ENCODE measurements at regions of chr19 and their contacts with region 1.

Region 1: GRCh38 chr19:35135389-35135909 is 590 bp upstream of the LGI4 start:
- DNase-seq: peak; percentile 98
- H3K4me3 ChIP-seq: no peak overlapping the region
- H3K27ac ChIP-seq: no peak overlapping the region
- H3K4me1 ChIP-seq: peaks cover 0 to 7% of the 10 kb centered on the region in 2 experiments; a peak in 1 of 4 replicates
- H3K27me3 ChIP-seq: peaks cover 15% of the 10 kb centered on the region; the same call in 1 of the 2 replicates
- CTCF ChIP-seq: peak; percentile 88
- EP300 ChIP-seq: 0 out of 4 replicates have a peak, but pooled peaks of 1 of the 2 experiments have one; percentile 14
- RAD21 ChIP-seq: peak; percentile 73

Region 2: DNA sequence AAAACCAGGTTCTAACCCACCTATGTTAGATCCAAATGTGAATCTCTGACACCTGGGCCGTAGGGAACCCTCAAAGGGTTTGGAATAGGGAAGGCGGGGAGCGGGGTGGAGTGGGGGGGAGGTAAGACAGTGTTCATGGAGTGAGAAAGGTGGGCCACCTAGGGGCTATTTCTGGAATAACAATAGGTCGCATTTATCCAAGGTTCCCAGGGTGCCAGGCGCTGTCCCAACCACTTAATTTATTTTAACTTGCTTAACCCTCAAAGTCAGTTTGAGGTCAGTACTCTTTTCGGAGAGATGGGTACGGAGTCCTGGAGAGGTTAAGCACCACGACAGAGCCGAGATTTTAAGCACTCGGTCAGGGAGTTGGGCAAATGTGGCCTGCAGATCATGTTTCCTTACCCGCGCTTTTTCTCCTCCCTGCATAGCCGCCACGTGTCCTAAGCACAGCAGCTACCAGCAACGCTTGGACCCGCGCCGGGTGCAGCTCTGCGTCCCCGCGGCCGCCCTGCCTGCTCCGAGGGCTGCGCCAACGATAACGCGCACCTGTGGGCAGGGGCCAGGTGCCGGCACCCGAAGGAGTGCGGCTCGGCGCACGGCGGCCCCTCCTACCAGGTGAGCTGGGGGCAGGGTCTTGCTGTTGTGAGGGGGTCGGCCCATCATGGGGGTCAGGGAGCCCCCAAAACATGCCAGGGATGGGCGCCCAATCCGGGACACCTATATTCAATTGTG is 44.8 kb before region 1 on chr19:
- CTCF ChIA-PET with region 1: interaction called, 25 read pairs
- POLR2A ChIA-PET with region 1: no interaction called
- DNase-seq: peak; percentile 90
- H3K4me3 ChIP-seq: no peak overlapping the region
- H3K27ac ChIP-seq: no peak overlapping the region
- H3K4me1 ChIP-seq: peaks cover 10 to 15% of the 10 kb centered on the region in 2 experiments; a peak in 2 of 4 replicates
- H3K27me3 ChIP-seq: no peaks in the 10 kb centered on the region
- CTCF ChIP-seq: peak; percentile 68
- EP300 ChIP-seq: no peak
- RAD21 ChIP-seq: peak; percentile 71

Region 3: GRCh38 chr19:35098413-35099049 is 36.9 kb before region 1 on chr19:
- CTCF ChIA-PET with region 1: interaction called, 25 read pairs
- POLR2A ChIA-PET with region 1: no interaction called
- DNase-seq: no peak
- H3K4me3 ChIP-seq: no peak overlapping the region
- H3K27ac ChIP-seq: no peak overlapping the region
- H3K4me1 ChIP-seq: peaks cover 0 to 8% of the 10 kb centered on the region in 2 experiments; a peak in 1 of 4 replicates
- H3K27me3 ChIP-seq: no peaks in the 10 kb centered on the region
- CTCF ChIP-seq: no peak
- EP300 ChIP-seq: no peak
- RAD21 ChIP-seq: no peak

Region 4: GRCh38 chr19:35114353-35115176 is 20.9 kb before region 1 on chr19:
- CTCF ChIA-PET with region 1: interaction called, 66 read pairs
- POLR2A ChIA-PET with region 1: no interaction called
- DNase-seq: peak; percentile 92
- H3K4me3 ChIP-seq: peak overlapping the region in 1 of 2 experiments; percentile 44; a peak in 1 of 4 replicates
- H3K27ac ChIP-seq: no peak overlapping the region
- H3K4me1 ChIP-seq: peaks cover 0 to 8% of the 10 kb centered on the region in 2 experiments; a peak in 1 of 4 replicates
- H3K27me3 ChIP-seq: no peaks in the 10 kb centered on the region; the same call in 1 of the 2 replicates
- CTCF ChIP-seq: peak; percentile 96
- EP300 ChIP-seq: no peak
- RAD21 ChIP-seq: peak; percentile 70

Region 5: DNA sequence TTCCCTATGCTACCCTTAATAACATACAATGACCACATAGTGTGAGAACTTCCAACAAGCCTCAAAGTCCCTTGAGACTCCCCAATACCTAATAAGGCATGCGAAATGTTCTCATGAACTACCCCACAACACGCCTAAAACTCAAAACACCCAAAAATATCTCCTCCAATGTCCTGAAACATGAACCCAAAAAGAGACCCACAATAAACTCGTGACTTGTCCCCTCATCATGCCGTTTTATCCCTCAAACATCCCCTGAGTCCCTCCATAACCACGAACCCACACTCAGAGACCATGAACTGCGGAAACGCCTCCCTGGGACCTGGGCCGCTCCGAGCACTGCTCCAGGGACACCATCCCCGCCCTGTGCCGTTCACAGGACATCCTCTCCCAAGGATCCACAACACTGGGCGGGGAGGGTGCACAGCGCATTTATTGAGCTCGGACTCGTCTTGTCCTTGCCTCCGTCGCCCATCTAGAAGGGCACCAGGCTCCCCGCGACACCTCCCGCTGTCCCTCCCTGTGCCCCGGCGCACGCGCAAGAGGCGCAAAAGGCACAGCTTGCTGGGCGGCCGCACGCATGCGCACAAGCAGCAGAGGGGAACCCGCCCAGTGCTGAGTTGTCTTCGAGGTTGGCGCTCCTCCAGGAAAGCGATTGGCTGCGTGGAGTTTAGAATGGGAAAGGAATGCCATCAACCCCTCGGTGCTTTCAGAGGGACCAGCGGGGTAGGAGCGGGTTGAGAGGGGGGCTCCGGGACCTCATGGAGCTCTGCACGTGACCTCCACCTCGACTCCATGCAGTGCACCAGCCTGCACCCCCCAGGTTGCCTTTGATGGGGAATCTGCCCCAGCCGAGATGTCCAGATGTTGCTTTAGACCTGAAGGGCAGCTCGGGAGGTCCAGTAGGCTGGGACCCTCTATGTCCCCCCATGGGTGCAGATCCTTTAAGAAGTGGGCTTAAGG is 11.1 kb before region 1 on chr19:
- CTCF ChIA-PET with region 1: interaction called, 60 read pairs
- POLR2A ChIA-PET with region 1: no interaction called
- DNase-seq: peak; percentile 98
- H3K4me3 ChIP-seq: peak overlapping the region; percentile 57 to 65
- H3K27ac ChIP-seq: peak overlapping the region in 1 of 2 experiments; percentile 71; a peak in 1 of 4 replicates
- H3K4me1 ChIP-seq: peaks cover 0 to 8% of the 10 kb centered on the region in 2 experiments; a peak in 1 of 4 replicates
- H3K27me3 ChIP-seq: no peaks in the 10 kb centered on the region; the same call in 1 of the 2 replicates
- CTCF ChIP-seq: no peak
- EP300 ChIP-seq: no peak
- RAD21 ChIP-seq: no peak

Measured in SK-N-SH (cell line).